ENCODE measurements at regions of chr14 and their contacts with region 1.

Region 1: GRCh38 chr14:93206793-93207467 is at the starts of genes GON7 and UBR7:
- H3K4me3 Mint-ChIP-seq: peak within 1 kb of the TSS; percentile 99
- H3K27ac Mint-ChIP-seq: peak within 1 kb of the TSS; percentile 90
- H3K4me1 Mint-ChIP-seq: peaks cover 49% of the 10 kb centered on the region
- H3K27me3 Mint-ChIP-seq: no peaks in the 10 kb centered on the region

Region 2: GRCh38 chr14:93184388-93185353 is 22.3 kb before region 1 on chr14 and contains the starts of genes LYSET and MOAP1:
- intact Hi-C with region 1: loop called (anchors 1 kb)
- H3K4me3 Mint-ChIP-seq: peak within 1 kb of the TSS; percentile 86
- H3K27ac Mint-ChIP-seq: peak within 1 kb of the TSS; percentile 90
- H3K4me1 Mint-ChIP-seq: peaks cover 26% of the 10 kb centered on the region
- H3K27me3 Mint-ChIP-seq: no peaks in the 10 kb centered on the region

Region 3: DNA sequence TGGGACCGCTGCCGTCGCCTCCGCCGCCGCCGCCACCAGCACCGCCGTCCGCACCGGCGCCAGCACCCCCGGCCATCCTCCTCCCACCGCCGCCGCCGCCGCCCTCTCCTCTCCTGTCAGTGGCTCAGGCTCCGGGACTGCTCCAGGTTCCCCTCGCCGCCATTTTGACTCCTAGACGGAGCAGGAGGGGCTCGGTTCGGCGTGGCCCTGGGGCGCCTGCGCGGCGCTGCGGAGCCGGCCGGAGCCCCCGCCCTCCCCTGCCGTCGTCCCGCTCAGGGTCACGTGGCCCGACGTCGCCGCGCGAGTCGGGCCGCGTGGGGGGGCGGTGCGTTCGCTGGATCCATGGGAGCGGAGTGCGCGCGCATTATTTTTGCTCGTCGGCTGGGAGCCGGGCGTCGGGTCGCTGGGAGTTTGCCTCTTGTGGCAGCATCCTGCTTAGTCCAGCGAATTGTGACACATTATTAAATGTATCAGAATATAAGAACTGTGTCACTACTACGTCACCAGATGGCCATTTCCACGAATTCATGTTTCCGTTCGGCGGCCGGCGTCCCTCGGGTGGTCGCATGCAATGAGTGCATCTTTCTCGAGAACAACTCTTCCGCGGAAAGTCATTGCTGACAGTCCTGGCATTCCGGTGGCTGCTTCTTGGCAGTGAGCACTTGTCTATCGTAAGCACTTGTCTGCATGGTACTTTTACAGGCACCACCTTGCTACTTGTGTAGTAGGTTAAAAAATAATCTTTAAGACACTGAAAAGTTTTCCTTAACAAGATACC is 126.1 kb after region 1 on chr14 and contains the start of gene BTBD7:
- intact Hi-C with region 1: loop called (anchors 5 kb)
- H3K4me3 Mint-ChIP-seq: peak within 1 kb of the TSS; percentile 85
- H3K27ac Mint-ChIP-seq: peak within 1 kb of the TSS; percentile 93
- H3K4me1 Mint-ChIP-seq: peaks cover 41% of the 10 kb centered on the region
- H3K27me3 Mint-ChIP-seq: no peaks in the 10 kb centered on the region

Region 4: GRCh38 chr14:93533472-93534241 is 326.7 kb after region 1 on chr14:
- intact Hi-C with region 1: loop called (anchors 5 kb)
- H3K4me3 Mint-ChIP-seq: no peak overlapping the region
- H3K27ac Mint-ChIP-seq: peak overlapping the region; percentile 13
- H3K4me1 Mint-ChIP-seq: peaks cover 25% of the 10 kb centered on the region
- H3K27me3 Mint-ChIP-seq: peaks cover 15% of the 10 kb centered on the region

Measured in dendritic cell treated with granulocyte-macrophage colony-stimulating factor and Interleukin-4, amounts not matched to agents 40 ng/mL and 50 ng/mL, for 4 days (primary cell).